Lower leg skin (tissue), 4 donors: ENCODE measurements at regions of chr7 and their contacts with region 1.

Region 1: GRCh38 chr7:139075031-139075652 is 34.4 kb downstream of the ZC3HAV1 start:
- DNase-seq: peak; percentile 77 to 88
- H3K4me3 ChIP-seq: no peak overlapping the region
- CTCF ChIP-seq: peak in 1 of 3 donors; percentile 31
- POLR2A ChIP-seq: no peak

Region 2: GRCh38 chr7:139016931-139017511 is 58.1 kb before region 1 on chr7:
- intact Hi-C with region 1: loop called (anchors 5 kb)
- DNase-seq: peak in 1 of 2 donors; percentile 53
- H3K4me3 ChIP-seq: no peak overlapping the region
- CTCF ChIP-seq: no peak
- POLR2A ChIP-seq: no peak

Region 3: GRCh38 chr7:139297795-139298194 is 222.7 kb after region 1 on chr7:
- intact Hi-C with region 1: no loop called
- DNase-seq: no peak
- H3K4me3 ChIP-seq: no peak overlapping the region
- CTCF ChIP-seq: no peak
- POLR2A ChIP-seq: no peak